CD4-positive, alpha-beta memory T cell (primary cell): ENCODE measurements at regions of chr10 and their contacts with region 1.

Region 1: GRCh38 chr10:33193057-33193700 is 141.3 kb downstream of the NRP1 start:
- DNase-seq: peak; percentile 64 to 70 (median 65)
- H3K4me3 ChIP-seq: no peak overlapping the region
- H3K4me3 Mint-ChIP-seq: peak overlapping the region in 1 of 8 donors; percentile 43
- H3K27ac ChIP-seq: no peak overlapping the region
- H3K27ac Mint-ChIP-seq: peak overlapping the region in 1 of 7 donors; percentile 7
- H3K4me1 ChIP-seq: peaks cover 6% of the 10 kb centered on the region
- H3K4me1 Mint-ChIP-seq: peaks cover 0 to 2% (median 0%) of the 10 kb centered on the region in 4 donors
- H3K27me3 ChIP-seq: no peaks in the 10 kb centered on the region
- H3K27me3 Mint-ChIP-seq: peaks cover 0 to 3% of the 10 kb centered on the region in 2 donors

Region 2: DNA sequence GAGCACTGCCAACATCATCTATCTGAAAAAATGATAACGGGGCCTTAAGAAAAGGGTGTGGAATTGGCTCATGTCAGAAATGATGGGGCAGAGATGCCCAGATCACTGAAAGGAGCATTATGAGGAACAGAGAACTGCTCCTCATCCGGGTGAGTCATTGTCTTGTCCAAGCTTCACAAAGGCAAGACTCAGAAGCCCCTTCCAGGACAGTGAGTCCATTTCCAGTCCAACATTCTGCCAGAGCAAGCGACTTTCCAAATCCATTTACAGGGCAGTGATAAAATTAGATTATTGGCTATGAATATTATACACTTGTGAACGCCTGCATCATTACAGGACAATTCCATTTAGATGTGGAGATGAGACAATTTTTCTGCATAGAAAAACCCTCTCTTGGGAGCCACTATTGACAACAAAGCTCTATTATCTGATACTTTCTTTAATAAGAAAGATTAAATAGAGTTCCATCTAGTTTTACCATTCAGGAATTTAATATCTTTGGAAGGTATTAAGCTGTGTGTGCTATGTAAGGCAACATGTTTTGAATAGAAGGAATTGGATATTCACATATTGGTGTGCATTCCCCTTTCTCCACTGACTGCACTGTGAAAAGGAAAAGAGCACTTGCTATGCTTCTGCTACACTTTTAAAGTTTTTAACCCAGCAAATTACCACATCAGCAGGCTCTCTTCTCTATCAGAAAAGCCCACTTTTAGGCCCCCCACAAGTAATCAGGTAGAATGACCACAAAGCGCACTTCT is 18.3 kb before region 1 on chr10:
- CTCF ChIA-PET with region 1: interaction called, 10 read pairs
- POLR2A ChIA-PET with region 1: no interaction called
- intact Hi-C with region 1: no loop called
- DNase-seq: no peak
- H3K4me3 ChIP-seq: no peak overlapping the region
- H3K4me3 Mint-ChIP-seq: no peak overlapping the region
- H3K27ac ChIP-seq: no peak overlapping the region
- H3K27ac Mint-ChIP-seq: no peak overlapping the region
- H3K4me1 ChIP-seq: no peaks in the 10 kb centered on the region
- H3K4me1 Mint-ChIP-seq: no peaks in the 10 kb centered on the region
- H3K27me3 ChIP-seq: no peaks in the 10 kb centered on the region
- H3K27me3 Mint-ChIP-seq: peaks cover 11 to 15% of the 10 kb centered on the region in 2 donors

Region 3: GRCh38 chr10:33211106-33211878 is 18.1 kb after region 1 on chr10:
- CTCF ChIA-PET with region 1: interaction called, 13 read pairs
- POLR2A ChIA-PET with region 1: no interaction called
- intact Hi-C with region 1: no loop called
- DNase-seq: peak in 3 of 5 donors; percentile 5 to 10 (median 5)
- H3K4me3 ChIP-seq: no peak overlapping the region
- H3K4me3 Mint-ChIP-seq: peak overlapping the region in 5 of 8 donors; percentile 29 to 77 (median 39)
- H3K27ac ChIP-seq: no peak overlapping the region
- H3K27ac Mint-ChIP-seq: peak overlapping the region; percentile 4 to 87 (median 78)
- H3K4me1 ChIP-seq: peaks cover 6% of the 10 kb centered on the region
- H3K4me1 Mint-ChIP-seq: peaks cover 11 to 25% (median 19%) of the 10 kb centered on the region in 4 donors
- H3K27me3 ChIP-seq: no peaks in the 10 kb centered on the region
- H3K27me3 Mint-ChIP-seq: no peaks in the 10 kb centered on the region

Region 4: GRCh38 chr10:33248638-33249037 is 55.5 kb after region 1 on chr10:
- CTCF ChIA-PET with region 1: interaction called, 13 read pairs
- POLR2A ChIA-PET with region 1: no interaction called
- intact Hi-C with region 1: loop called (anchors 1 kb)
- DNase-seq: peak; percentile 69 to 78 (median 74)
- H3K4me3 ChIP-seq: peak overlapping the region in 1 of 2 donors; percentile 12
- H3K4me3 Mint-ChIP-seq: peak overlapping the region; percentile 55 to 86 (median 80)
- H3K27ac ChIP-seq: peak overlapping the region; percentile 2
- H3K27ac Mint-ChIP-seq: peak overlapping the region; percentile 61 to 90 (median 82)
- H3K4me1 ChIP-seq: peaks cover 33% of the 10 kb centered on the region
- H3K4me1 Mint-ChIP-seq: peaks cover 26 to 72% (median 37%) of the 10 kb centered on the region in 4 donors
- H3K27me3 ChIP-seq: no peaks in the 10 kb centered on the region
- H3K27me3 Mint-ChIP-seq: no peaks in the 10 kb centered on the region

Region 5: DNA sequence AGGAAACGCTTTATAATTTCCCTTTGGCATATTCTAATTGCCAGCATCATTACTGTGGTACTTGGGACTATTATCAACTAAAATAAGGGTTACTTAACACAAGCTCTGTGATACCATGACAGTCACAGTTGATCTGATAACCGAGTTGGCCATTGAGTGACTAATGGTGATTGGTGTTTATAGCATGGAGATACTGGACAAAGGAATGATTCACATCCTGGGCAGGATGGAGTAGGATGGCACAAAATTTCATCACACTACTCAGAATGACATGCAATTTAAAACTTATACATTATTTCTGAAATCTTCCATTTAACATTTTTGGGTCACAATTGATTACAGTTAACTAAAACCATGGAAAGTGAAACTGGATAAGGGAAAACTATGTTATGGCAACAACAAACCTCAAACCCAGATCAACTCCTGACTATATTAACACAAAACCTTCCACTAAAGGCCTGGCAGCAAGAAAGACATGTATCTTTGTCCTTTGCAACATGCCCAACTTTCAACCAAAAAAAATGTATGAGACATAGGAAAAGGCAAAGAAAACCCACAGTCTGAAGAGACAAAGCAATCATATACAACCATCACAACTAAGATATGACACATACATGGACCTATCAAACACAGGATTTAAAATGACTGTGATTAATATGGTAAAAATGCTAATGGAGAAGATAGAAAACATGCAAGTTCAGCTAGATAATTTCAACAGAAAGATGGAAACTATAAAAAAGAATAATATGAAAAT is 349.8 kb after region 1 on chr10:
- CTCF ChIA-PET with region 1: no interaction called
- POLR2A ChIA-PET with region 1: no interaction called
- intact Hi-C with region 1: loop called (anchors 10 kb)
- DNase-seq: no peak
- H3K4me3 ChIP-seq: no peak overlapping the region
- H3K4me3 Mint-ChIP-seq: no peak overlapping the region
- H3K27ac ChIP-seq: no peak overlapping the region
- H3K27ac Mint-ChIP-seq: peak overlapping the region in 1 of 7 donors; percentile 37
- H3K4me1 ChIP-seq: no peaks in the 10 kb centered on the region
- H3K4me1 Mint-ChIP-seq: no peaks in the 10 kb centered on the region
- H3K27me3 ChIP-seq: no peaks in the 10 kb centered on the region
- H3K27me3 Mint-ChIP-seq: peaks cover 16 to 21% of the 10 kb centered on the region in 2 donors

Region 6: GRCh38 chr10:34637418-34637911 is 1444.3 kb after region 1 on chr10:
- CTCF ChIA-PET with region 1: interaction called, 39 read pairs
- POLR2A ChIA-PET with region 1: no interaction called
- intact Hi-C with region 1: no loop called
- DNase-seq: peak; percentile 43 to 55 (median 48)
- H3K4me3 ChIP-seq: no peak overlapping the region
- H3K4me3 Mint-ChIP-seq: peak overlapping the region in 3 of 8 donors; percentile 3 to 47 (median 39)
- H3K27ac ChIP-seq: no peak overlapping the region
- H3K27ac Mint-ChIP-seq: no peak overlapping the region
- H3K4me1 ChIP-seq: no peaks in the 10 kb centered on the region
- H3K4me1 Mint-ChIP-seq: peaks cover 5 to 14% (median 9%) of the 10 kb centered on the region in 4 donors
- H3K27me3 ChIP-seq: no peaks in the 10 kb centered on the region
- H3K27me3 Mint-ChIP-seq: no peaks in the 10 kb centered on the region